Esophagus muscularis mucosa (tissue), 4 donors: ENCODE measurements at regions of chr17 and their contacts with region 1.

Region 1: DNA sequence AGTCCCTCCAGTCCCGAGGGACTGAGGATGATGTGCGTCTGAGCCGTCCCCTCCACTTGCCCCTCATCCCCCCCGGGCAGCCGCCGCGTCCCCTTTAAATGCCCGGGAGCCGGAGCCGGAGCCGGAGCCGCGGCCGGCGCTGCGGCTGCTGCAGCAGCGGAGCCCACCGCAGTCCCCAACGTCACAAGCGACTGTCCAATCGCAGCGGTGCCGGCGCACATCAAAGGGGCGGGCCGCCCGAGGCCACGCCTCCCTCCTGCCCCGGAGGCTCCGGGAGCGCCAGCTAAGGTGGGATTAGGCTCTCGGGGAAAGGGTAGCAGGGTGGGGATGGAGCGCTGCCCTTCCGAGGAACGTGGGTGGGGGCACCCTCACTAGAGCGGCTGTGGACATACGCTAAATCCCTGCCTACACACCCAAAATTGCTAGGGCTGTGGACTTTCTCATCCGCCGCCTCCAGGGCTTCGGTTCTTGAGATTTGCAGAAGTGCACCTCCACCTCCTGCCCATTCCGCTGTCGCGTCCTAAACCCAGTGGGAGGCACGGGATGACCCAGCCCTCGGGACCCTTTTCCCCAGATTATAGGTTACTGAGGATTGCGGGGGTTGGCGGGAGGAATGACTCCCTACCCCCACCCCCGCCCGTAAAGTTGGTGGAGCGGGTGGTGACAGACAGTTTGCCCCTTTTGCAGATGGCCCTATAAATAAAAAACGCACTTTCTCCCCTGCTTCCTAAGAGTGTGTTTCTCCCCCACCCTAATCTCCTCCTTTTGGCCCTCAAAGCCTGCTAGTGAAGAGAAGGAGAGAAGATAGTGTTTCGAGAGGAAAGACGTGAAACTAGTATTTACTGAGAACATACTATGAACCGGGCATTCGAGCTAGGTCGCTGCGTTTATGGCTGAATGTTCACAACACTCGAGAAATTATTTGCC is at the start of gene PHOSPHO1:
- DNase-seq: no peak
- H3K4me3 ChIP-seq: peak within 1 kb of the TSS; percentile 61 to 68 (median 64)
- H3K27ac ChIP-seq: peak within 1 kb of the TSS in 1 of 4 donors; percentile 59
- H3K4me1 ChIP-seq: peaks cover 12 to 22% (median 21%) of the 10 kb centered on the region in 4 donors
- H3K27me3 ChIP-seq: peaks cover 0 to 20% (median 4%) of the 10 kb centered on the region in 4 donors
- CTCF ChIP-seq: peak in 1 of 3 experiments; percentile 10
- EP300 ChIP-seq: no peak
- POLR2A ChIP-seq: no peak
- total RNA-seq, gene PHOSPHO1: 1.2 to 1.5 (median 1.4) TPM in 3 of 4 donors, not detected in the other

Region 2: DNA sequence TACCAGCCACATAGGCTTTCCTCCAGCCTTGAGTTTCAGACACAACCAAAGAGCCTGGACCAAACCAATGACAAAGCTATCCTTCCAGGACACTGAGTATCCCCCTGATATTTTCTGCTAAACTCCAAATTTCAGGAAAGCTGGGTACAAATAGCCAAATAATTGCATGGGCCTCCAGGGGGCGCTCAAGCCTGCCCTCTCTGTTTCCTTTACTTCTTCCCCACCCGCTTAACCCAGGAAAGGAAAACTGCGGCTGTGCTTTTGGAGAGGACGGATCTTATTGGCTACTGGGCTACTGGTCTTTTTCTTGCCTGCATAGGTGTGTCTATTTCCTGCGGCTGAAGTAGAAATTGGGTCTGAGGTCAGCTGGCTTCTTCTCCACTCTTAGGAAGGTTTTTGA is 50.6 kb before region 1 on chr17:
- intact Hi-C with region 1: loop called (anchors 2 kb)
- DNase-seq: no peak
- H3K4me3 ChIP-seq: no peak overlapping the region
- H3K27ac ChIP-seq: no peak overlapping the region
- H3K4me1 ChIP-seq: no peaks in the 10 kb centered on the region
- H3K27me3 ChIP-seq: peaks cover 0 to 11% (median 0%) of the 10 kb centered on the region in 4 donors
- CTCF ChIP-seq: peak; percentile 60 to 74 (median 60)
- EP300 ChIP-seq: no peak
- POLR2A ChIP-seq: no peak

Region 3: DNA sequence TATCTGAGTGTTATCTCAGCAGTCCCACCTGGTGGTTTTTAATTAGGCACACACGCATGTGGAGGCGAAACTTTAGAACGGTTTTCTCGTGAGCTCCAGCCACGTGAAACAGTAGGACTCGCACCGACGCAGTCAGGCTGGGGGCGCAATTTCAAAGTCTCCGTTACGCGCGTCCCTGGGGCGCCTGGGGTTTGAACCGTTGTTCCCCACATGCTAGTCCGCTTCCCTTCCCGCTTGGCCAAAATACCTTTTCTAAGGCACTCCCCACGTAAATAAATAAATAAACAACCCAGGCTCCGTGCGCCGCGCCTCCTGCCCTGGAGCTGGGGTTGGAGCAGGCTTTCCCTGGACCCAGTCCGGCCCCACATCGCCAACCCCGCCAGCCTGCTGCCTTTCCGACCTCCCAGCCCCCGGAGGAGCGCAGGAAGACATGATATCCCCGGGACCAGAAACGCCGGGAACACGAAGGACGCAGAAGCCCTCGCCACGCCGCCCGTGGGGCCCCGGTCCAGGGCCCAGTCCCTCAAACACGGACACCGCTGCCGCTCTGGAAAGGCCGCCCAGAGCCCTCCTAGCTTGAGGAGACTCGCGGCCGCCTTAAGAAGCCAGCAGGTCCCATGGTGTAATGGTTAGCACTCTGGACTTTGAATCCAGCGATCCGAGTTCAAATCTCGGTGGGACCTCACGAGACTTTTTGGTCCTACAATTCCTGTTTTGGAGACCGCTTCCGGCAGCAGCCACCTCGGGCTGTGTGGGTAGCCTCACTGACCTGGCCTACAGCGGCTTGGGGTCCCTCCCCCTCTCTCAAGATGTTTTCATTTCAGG is 38.8 kb before region 1 on chr17:
- intact Hi-C with region 1: loop called (anchors 2 kb)
- DNase-seq: peak; percentile 99
- H3K4me3 ChIP-seq: peak overlapping the region; percentile 71 to 96 (median 82)
- H3K27ac ChIP-seq: peak overlapping the region; percentile 91 to 99 (median 96)
- H3K4me1 ChIP-seq: peaks cover 0 to 17% (median 13%) of the 10 kb centered on the region in 4 donors
- H3K27me3 ChIP-seq: no peaks in the 10 kb centered on the region
- CTCF ChIP-seq: peak; percentile 26 to 41 (median 29)
- EP300 ChIP-seq: no peak
- POLR2A ChIP-seq: peak; percentile 8

Region 4: GRCh38 chr17:49277638-49278037 is 46.7 kb after region 1 on chr17:
- intact Hi-C with region 1: no loop called
- DNase-seq: no peak
- H3K4me3 ChIP-seq: no peak overlapping the region
- H3K27ac ChIP-seq: no peak overlapping the region
- H3K4me1 ChIP-seq: no peaks in the 10 kb centered on the region
- H3K27me3 ChIP-seq: no peaks in the 10 kb centered on the region
- CTCF ChIP-seq: no peak
- EP300 ChIP-seq: no peak
- POLR2A ChIP-seq: no peak